Left cardiac atrium (tissue), 4 donors: ENCODE measurements at regions of chr2 and their contacts with region 1.

Region 1: GRCh38 chr2:89821455-89821945 is 1130.0 kb downstream of the RPIA start:
- DNase-seq: no peak
- ATAC-seq: no peak

Region 2: GRCh38 chr2:88416016-88416680 is 1405.4 kb before region 1 on chr2:
- intact Hi-C with region 1: no loop called
- DNase-seq: no peak
- ATAC-seq: no peak

Region 3: DNA sequence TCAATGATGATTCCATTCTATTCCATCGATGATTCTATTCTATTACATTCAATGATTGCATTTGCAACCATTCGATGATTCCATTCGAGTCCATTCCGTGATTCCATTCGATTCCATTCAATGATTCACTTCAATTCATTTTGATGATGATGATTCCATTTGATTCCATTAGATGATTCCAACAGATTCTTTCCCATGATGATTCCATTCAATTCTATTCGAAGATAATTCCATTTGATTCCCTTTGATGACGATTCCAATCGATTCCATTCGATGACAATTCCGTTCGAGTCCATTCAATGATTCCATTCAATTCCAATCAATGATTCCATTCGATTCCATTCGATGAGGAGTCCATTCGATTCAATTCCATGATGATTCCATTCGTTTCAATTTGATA is 41.2 kb before region 1 on chr2:
- intact Hi-C with region 1: loop called in 1 of 2 experiments (anchors 5 kb)
- DNase-seq: no peak
- ATAC-seq: no peak

Region 4: DNA sequence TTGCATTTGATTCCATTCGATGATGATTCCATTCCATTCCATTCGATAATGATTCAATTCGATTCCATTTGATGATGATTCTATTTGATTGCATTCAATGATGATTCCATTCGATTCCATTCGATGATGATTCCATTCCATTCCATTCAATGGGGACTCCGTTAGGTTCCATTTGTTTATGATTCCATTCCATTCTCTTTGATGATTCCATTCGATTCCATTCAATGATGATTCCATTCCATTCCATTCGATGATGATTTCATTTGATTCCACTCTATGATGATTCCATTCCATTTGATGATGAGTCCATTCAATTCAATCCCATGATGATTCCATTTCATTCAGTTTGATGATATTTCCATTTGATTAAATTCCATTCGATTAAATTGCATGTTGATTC is 21.1 kb before region 1 on chr2:
- intact Hi-C with region 1: no loop called
- DNase-seq: no peak
- ATAC-seq: no peak

Region 5: DNA sequence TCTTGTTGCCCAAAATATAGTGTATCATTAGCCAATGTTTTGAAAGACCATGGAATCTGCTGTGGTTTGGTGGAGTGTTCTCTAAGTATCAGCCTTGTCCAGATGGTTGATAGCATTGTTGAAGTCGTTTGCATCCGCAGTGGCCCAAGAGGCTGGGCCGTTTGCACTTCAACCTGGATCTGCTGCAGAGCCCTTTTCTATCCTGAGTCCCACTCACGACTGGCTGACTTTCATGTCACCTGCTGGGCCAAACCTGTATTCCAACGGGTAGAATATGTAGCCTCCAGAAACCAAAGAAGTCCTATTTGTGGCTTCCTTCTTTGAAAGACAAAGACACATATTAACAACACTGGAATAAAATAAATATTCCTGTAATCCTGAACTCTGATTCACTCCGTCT is 24.0 kb after region 1 on chr2:
- intact Hi-C with region 1: loop called in 1 of 2 experiments (anchors 1 kb)
- DNase-seq: no peak
- ATAC-seq: no peak